ENCODE measurements at regions of chr5 and their contacts with region 1.

Region 1: GRCh38 chr5:151126199-151126645 is 31.4 kb downstream of the ANXA6 start:
- DNase-seq: peak; percentile 29 to 85
- H3K4me3 ChIP-seq: no peak overlapping the region
- H3K27ac ChIP-seq: no peak overlapping the region
- H3K4me1 ChIP-seq: peaks cover 0 to 3% (median 0%) of the 10 kb centered on the region in 4 experiments; a peak in 3 of 7 replicates
- H3K27me3 ChIP-seq: no peaks in the 10 kb centered on the region
- CTCF ChIP-seq: peak; percentile 85 to 94 (median 87)
- EP300 ChIP-seq: no peak
- POLR2A ChIP-seq: no peak
- RAD21 ChIP-seq: peak; percentile 85 to 90

Region 2: GRCh38 chr5:151093476-151093889 is 32.7 kb before region 1 on chr5:
- CTCF ChIA-PET with region 1: interaction called, 13 read pairs
- POLR2A ChIA-PET with region 1: no interaction called
- DNase-seq: no peak
- H3K4me3 ChIP-seq: no peak overlapping the region
- H3K27ac ChIP-seq: no peak overlapping the region
- H3K4me1 ChIP-seq: peaks cover 1 to 20% (median 11%) of the 10 kb centered on the region in 4 experiments; a peak in 4 of 7 replicates
- H3K27me3 ChIP-seq: no peaks in the 10 kb centered on the region; a peak in 2 of 7 replicates
- CTCF ChIP-seq: no peak
- EP300 ChIP-seq: no peak
- POLR2A ChIP-seq: no peak
- RAD21 ChIP-seq: no peak

Region 3: DNA sequence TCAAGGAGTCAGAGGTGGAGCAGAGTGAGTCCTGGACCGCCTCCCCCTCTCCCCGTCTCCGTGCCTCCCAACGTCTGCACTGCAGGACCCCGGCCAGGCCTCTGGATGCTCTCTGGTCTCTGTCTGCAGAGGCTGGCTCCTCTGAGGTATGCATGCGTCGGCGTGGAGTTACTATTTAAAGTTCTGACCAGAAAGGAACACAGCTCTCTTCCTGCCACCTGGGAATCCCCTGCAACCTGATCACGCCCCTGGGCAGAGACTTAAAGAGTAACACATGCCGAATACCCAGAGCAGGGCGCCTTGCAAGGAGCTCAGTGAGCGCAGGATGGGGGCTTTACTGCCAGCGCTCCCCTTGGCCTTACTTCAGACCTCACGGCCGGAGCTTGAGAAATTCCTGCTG is 15.3 kb after region 1 on chr5:
- CTCF ChIA-PET with region 1: interaction called, 83 read pairs
- POLR2A ChIA-PET with region 1: interaction called, 3 read pairs
- DNase-seq: peak in 1 of 2 experiments; percentile 58
- H3K4me3 ChIP-seq: no peak overlapping the region
- H3K27ac ChIP-seq: peak overlapping the region; percentile 34; the same call in 1 of the 2 replicates
- H3K4me1 ChIP-seq: peaks cover 0 to 12% (median 7%) of the 10 kb centered on the region in 4 experiments; a peak in 5 of 7 replicates
- H3K27me3 ChIP-seq: no peaks in the 10 kb centered on the region; a peak in 1 of 7 replicates
- CTCF ChIP-seq: no peak
- EP300 ChIP-seq: no peak
- POLR2A ChIP-seq: peak in 1 of 2 experiments; percentile 32; a peak in 1 of 3 replicates
- RAD21 ChIP-seq: no peak

Region 4: DNA sequence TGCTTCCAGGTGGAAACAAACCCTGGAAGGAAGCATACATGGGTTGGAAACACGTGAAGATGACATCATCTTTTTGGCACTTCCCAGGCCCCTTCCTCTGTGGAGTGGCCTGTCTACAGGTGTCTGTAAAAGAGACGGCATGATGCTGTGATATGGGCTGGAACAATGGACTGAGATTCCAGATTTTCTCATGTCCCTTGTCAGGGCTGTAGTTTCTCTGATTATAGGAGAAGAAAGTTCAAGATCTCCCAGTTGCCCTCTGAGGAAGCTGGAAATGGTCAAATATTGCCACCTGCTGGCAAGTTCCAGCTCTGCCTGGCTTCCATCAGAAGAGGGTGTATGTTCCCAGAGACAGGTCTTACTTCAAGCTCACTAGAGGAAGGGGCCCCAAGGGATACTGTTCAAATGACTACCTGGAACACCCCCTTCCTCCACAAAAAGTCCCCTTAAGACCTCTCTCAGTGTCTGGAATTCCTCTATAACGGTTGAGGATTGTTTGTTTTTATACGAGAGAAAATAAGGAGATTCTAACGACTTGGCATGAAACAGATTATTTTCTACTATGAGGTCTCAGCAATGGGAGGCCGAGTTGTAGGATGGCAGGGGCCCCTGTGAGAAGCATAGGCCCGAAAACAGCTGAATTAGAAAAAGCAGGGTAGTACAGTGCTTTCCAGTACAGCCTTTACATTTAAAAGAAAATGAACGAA is 38.6 kb after region 1 on chr5:
- CTCF ChIA-PET with region 1: interaction called, 810 read pairs
- POLR2A ChIA-PET with region 1: interaction called, 11 read pairs
- DNase-seq: peak in 1 of 2 experiments; percentile 85
- H3K4me3 ChIP-seq: no peak overlapping the region
- H3K27ac ChIP-seq: no peak overlapping the region
- H3K4me1 ChIP-seq: no peaks in the 10 kb centered on the region; a peak in 1 of 7 replicates
- H3K27me3 ChIP-seq: no peaks in the 10 kb centered on the region
- CTCF ChIP-seq: peak; percentile 64 to 95 (median 92)
- EP300 ChIP-seq: no peak
- POLR2A ChIP-seq: no peak
- RAD21 ChIP-seq: peak; percentile 96 to 99

Region 5: GRCh38 chr5:151239237-151239861 is 113.1 kb after region 1 on chr5:
- CTCF ChIA-PET with region 1: interaction called, 63 read pairs
- POLR2A ChIA-PET with region 1: no interaction called
- DNase-seq: peak in 1 of 2 experiments; percentile 89
- H3K4me3 ChIP-seq: no peak overlapping the region
- H3K27ac ChIP-seq: no peak overlapping the region
- H3K4me1 ChIP-seq: peaks cover 3 to 11% (median 7%) of the 10 kb centered on the region in 4 experiments; a peak in 6 of 7 replicates
- H3K27me3 ChIP-seq: no peaks in the 10 kb centered on the region
- CTCF ChIP-seq: peak; percentile 86 to 94 (median 87)
- EP300 ChIP-seq: no peak
- POLR2A ChIP-seq: no peak
- RAD21 ChIP-seq: peak; percentile 82 to 89

Measured in H1 (cell line).